ENCODE measurements at regions of chr20 and their contacts with region 1.

Region 1: GRCh38 chr20:13249118-13249797 is 28.2 kb downstream of the ISM1 start:
- DNase-seq: no peak
- H3K4me3 Mint-ChIP-seq: no peak overlapping the region
- H3K27ac Mint-ChIP-seq: no peak overlapping the region
- H3K4me1 Mint-ChIP-seq: peaks cover 58% of the 10 kb centered on the region
- H3K27me3 Mint-ChIP-seq: no peaks in the 10 kb centered on the region

Region 2: DNA sequence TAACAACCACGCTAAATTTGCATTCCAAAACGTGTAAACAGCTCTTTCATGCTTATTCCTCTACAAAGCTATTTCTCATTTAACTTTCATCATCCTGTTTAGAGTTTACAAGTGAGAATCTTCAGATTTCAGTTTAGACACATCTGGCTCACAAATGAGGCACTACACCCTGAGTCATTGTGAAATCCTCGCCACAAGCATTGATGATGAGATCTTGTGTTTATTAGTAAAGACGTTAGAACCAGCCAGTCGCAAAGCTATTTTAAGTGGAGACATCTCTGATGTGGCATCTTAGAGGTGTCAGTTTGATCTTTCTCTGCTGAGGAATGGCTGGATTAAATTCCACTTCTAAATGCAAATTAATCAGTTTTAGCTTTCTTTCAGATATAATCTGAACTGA is 36.5 kb before region 1 on chr20:
- CTCF ChIA-PET with region 1: no interaction called
- intact Hi-C with region 1: loop called (anchors 5 kb)
- DNase-seq: peak; percentile 39
- H3K4me3 Mint-ChIP-seq: no peak overlapping the region
- H3K27ac Mint-ChIP-seq: no peak overlapping the region
- H3K4me1 Mint-ChIP-seq: no peaks in the 10 kb centered on the region
- H3K27me3 Mint-ChIP-seq: peaks cover 22% of the 10 kb centered on the region

Measured in activated naive CD4-positive, alpha-beta T cell treated with anti-CD3 and anti-CD28 coated beads for 36 hours (primary cell).